Activated T-helper 2 cell treated with anti-CD3 and anti-CD28 coated beads, Interferon-gamma antibody, Interleukin-2, Interleukin-4, amounts not matched to agents 10 μg/mL and 5 μg/mL and 100 μg/mL, durations not matched to agents 14 hours and 24 hours and 36 hours (primary cell): ENCODE measurements at regions of chr11 and their contacts with region 1.

Region 1: GRCh38 chr11:108121274-108122155 is at the start of gene ACAT1:
- DNase-seq: peak; percentile 95
- H3K4me3 Mint-ChIP-seq: peak within 1 kb of the TSS; percentile 95
- H3K27ac Mint-ChIP-seq: peak within 1 kb of the TSS; percentile 90
- H3K4me1 Mint-ChIP-seq: peaks cover 40% of the 10 kb centered on the region
- H3K27me3 Mint-ChIP-seq: no peaks in the 10 kb centered on the region
- total RNA-seq, gene ACAT1: 66.8 and 76.6 TPM in 2 replicates

Region 2: DNA sequence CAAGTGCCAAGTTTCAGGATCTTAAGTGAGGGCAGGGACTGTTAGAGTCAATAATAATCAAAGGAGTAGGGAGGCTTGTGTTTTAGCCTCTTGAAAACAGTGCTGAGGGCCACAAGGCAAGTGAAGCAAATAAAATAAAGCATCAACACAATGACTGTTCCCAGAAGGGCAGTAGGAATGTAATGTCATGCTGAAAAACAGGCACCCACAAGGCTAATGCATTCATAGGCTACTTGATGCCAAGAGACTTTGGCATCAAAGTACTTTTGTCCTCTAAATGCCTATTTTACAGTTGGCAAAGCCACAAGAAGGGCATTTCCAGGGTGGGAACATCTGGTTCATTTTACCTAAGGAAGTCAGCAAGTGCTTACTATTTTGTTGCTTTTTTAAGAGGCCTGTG is 170.4 kb before region 1 on chr11:
- intact Hi-C with region 1: no loop called
- DNase-seq: no peak
- H3K4me3 Mint-ChIP-seq: no peak overlapping the region
- H3K27ac Mint-ChIP-seq: no peak overlapping the region
- H3K4me1 Mint-ChIP-seq: no peaks in the 10 kb centered on the region
- H3K27me3 Mint-ChIP-seq: no peaks in the 10 kb centered on the region

Region 3: DNA sequence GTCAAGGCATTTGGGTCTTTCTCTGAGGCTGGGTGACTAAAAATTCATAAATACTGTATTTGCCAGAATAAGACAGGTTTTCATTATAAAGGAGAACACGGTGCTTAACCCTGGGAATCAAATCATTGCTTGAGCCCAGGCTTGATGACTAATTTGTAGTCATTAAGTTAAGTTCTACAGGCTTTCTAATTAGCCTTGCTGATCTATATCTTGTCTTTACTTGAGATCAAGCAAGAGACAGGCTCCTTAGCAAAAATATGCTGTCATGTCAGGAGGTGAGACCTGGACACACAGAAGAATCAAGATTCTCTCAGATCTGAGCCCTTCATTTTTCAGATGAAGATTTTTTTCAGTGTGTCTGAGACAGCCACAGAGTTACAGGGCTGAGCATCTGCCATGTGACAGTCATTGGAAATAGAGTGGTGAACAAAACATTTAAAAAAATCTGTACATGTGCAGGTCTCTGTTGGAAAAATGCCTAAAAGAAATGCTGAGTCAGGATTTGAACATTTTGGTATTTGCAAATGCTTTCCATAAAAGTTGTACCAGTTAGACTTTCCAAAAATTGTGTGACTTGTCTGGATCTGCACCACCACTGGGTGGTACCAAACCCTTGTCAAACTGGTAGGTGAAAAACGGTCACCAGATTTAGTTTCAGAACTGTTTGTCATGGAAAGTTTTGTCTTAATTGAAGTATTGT is 14.5 kb after region 1 on chr11:
- intact Hi-C with region 1: loop called (anchors 1 kb)
- DNase-seq: no peak
- H3K4me3 Mint-ChIP-seq: no peak overlapping the region
- H3K27ac Mint-ChIP-seq: peak overlapping the region; percentile 79
- H3K4me1 Mint-ChIP-seq: peaks cover 20% of the 10 kb centered on the region
- H3K27me3 Mint-ChIP-seq: no peaks in the 10 kb centered on the region

Region 4: DNA sequence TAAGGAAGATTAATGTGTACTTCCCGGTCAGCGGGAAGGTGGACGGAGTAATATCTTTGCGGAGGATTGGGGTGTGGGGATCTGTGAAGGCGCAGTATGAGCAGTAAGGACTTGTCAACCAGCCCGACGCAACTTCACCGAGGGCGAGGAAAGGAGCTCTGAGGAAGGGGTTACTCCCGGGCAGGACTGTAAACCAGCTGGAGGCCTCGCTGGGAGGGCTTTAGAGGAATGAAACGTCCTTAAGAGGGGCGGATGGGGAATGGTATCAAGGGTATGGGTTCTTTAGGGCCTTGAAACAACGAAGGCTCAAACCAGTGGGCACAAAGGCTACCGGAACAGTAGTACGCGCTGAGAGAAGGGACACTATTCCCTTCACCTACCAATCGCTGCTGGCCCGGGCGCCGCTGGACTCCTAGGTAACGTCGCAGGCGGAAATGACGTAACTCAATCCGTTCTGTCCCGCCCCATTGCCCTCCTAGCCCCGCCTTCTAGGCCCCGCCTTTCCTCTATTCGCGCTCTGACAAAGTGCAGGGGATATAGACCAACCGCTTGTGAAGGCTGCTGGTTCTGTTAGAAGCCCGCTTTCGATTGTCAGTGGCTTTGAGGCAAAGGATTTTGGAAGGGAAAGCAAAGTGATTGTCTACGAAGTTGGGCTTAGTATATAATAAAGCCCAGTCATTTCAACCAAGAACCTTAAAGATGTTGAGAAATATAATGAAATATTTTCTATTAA is 345.7 kb after region 1 on chr11 and contains the start of gene C11orf65:
- intact Hi-C with region 1: loop called (anchors 1 kb)
- DNase-seq: peak; percentile 94
- H3K4me3 Mint-ChIP-seq: peak within 1 kb of the TSS; percentile 96
- H3K27ac Mint-ChIP-seq: peak within 1 kb of the TSS; percentile 100
- H3K4me1 Mint-ChIP-seq: peaks cover 16% of the 10 kb centered on the region
- H3K27me3 Mint-ChIP-seq: no peaks in the 10 kb centered on the region
- total RNA-seq, gene C11orf65: 0.43 and 0.97 TPM in 2 replicates

Region 5: GRCh38 chr11:108647701-108648527 is 526.4 kb after region 1 on chr11:
- intact Hi-C with region 1: loop called (anchors 2 kb)
- DNase-seq: peak; percentile 39
- H3K4me3 Mint-ChIP-seq: no peak overlapping the region
- H3K27ac Mint-ChIP-seq: no peak overlapping the region
- H3K4me1 Mint-ChIP-seq: no peaks in the 10 kb centered on the region
- H3K27me3 Mint-ChIP-seq: peaks cover 7% of the 10 kb centered on the region

Region 6: DNA sequence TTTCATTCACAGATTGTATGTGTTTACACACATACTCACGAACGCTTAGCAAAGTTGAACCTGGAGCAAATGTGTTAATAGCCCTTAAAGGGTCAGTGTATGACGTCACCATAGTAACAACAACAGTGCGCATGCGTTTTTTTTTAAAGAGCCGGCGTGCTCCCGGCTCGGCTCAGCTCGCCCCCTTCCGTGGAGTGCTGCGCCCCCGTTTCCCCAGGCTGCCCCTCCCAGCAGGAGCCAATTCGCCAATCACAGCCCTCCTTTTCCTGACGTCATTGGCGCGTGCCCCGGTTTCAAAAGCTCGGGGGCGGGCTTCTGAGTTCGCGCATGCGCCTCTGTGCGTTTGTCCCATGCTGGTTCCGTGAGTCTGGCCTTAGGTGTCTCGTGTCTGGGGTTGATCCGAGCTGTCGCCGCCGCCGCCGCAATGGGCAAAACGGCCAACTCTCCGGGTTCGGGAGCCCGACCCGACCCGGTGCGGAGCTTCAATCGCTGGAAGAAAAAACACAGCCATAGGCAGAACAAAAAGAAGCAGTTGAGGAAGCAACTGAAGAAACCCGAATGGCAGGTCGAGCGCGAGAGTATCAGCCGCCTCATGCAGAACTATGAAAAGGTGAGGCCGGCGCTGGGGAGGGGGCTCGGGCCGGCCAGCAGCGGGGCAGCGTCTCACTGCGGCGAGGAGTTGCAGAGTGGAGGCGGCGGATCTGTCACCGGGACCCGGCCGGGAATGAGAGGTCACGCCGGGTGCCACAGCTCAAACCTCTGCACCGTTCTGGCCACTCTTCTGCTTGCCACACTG is 543.4 kb after region 1 on chr11 and contains the start of gene DDX10:
- intact Hi-C with region 1: loop called (anchors 1 kb)
- DNase-seq: peak; percentile 98
- H3K4me3 Mint-ChIP-seq: peak within 1 kb of the TSS; percentile 99
- H3K27ac Mint-ChIP-seq: peak within 1 kb of the TSS; percentile 97
- H3K4me1 Mint-ChIP-seq: peaks cover 28% of the 10 kb centered on the region
- H3K27me3 Mint-ChIP-seq: peaks cover 6% of the 10 kb centered on the region
- total RNA-seq, gene DDX10: 57.8 TPM in 2 replicates